PC-9 (cell line): ENCODE measurements at regions of chr14 and their contacts with region 1.

Region 1: DNA sequence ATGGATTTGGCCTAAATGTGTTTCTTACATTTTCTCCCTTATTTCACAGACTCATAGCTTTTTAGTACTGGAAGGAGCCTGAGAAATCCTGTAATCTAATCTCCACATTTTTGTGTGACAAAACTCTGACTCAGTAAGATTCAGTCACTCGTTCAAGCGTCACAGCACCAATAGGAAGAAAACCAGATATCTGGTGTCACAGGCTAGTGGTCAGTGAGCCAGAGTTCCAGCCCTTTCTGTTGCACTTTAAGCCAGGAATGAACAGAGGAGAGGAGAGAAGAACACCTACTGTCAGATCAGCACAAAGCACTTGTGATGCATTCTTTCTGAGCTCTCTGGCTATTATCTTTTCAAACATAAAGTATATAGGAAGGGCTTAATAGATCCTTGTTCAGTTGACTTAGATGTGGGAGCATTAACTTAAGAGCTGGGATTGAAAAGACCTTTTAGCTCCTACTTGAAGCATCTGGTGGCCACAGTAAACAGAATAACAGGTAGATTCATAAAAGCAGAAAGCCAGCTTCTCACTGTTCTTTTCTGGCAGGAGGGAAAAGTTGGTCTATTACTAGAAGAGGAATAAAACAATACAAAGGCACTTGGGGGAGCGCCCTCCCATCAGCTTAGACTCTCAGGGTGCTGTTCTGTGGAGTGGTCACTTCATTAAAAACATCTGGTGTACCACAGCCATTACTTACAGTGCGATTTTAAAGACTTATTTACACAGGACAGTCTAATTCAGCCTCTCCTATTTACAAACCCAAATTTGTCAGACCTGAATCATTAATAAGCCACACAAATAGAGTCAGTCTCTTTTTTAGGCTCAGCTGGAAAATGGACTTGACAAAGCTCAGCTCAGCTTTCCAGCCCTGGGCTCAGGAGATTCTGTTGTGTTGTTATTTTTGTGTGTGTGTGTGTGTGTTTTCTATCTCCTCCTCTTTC is 12.2 kb upstream of the NID2 start:
- DNase-seq: peak; percentile 59 to 82
- H3K4me3 ChIP-seq: no peak overlapping the region
- H3K27ac ChIP-seq: peak overlapping the region; percentile 87
- H3K4me1 ChIP-seq: peaks cover 60% of the 10 kb centered on the region
- H3K27me3 ChIP-seq: no peaks in the 10 kb centered on the region
- CTCF ChIP-seq: no peak

Region 2: DNA sequence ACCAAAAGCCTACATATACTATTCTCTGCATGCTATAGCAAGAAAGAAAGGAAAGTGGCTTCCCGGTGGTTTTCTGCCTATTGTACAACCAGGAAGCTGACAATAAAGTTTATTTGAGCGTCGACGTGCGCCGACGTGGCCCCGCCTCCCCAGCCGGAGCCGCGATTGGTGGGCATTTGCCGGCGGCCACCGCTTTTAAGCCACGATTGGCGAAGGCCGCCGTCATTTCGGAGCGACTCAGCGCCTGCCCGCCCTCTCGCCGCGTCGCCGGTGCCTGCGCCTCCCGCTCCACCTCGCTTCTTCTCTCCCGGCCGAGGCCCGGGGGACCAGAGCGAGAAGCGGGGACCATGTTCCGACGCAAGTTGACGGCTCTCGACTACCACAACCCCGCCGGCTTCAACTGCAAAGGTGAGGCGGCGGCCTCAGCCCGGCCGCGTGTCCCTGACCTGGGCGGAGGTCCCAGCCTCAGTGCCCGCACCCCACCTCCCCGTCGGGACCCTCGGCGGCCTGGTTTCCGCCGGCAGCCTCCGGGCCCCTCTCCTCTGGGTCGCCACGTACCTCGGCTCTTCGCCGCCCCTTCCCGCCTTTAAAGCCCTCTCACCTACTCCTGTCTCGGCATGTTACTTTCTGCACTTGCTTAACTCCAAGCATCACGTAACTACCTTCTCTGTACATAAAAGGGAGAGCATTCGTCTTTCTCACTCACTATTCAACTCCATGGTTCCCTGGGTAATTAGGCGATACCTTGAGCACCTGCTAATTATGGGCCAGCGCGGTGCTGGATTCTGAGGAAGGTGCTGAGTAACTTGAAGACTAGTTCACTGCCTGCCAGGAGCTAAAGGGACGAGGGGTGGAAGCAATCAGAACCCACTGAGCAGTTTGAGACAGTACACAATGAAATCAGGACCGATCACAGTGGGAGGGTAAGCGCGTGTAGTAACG is 91.5 kb before region 1 on chr14 and contains the start of gene RTRAF:
- CTCF ChIA-PET with region 1: no interaction called
- POLR2A ChIA-PET with region 1: interaction called, 4 read pairs
- intact Hi-C with region 1: loop called (anchors 5 kb)
- DNase-seq: peak; percentile 80 to 90
- H3K4me3 ChIP-seq: peak within 1 kb of the TSS; percentile 100
- H3K27ac ChIP-seq: peak within 1 kb of the TSS; percentile 60
- H3K4me1 ChIP-seq: peaks cover 20% of the 10 kb centered on the region
- H3K27me3 ChIP-seq: no peaks in the 10 kb centered on the region
- CTCF ChIP-seq: no peak
- total RNA-seq, gene RTRAF: 162 and 184 TPM in 2 replicates

Region 3: DNA sequence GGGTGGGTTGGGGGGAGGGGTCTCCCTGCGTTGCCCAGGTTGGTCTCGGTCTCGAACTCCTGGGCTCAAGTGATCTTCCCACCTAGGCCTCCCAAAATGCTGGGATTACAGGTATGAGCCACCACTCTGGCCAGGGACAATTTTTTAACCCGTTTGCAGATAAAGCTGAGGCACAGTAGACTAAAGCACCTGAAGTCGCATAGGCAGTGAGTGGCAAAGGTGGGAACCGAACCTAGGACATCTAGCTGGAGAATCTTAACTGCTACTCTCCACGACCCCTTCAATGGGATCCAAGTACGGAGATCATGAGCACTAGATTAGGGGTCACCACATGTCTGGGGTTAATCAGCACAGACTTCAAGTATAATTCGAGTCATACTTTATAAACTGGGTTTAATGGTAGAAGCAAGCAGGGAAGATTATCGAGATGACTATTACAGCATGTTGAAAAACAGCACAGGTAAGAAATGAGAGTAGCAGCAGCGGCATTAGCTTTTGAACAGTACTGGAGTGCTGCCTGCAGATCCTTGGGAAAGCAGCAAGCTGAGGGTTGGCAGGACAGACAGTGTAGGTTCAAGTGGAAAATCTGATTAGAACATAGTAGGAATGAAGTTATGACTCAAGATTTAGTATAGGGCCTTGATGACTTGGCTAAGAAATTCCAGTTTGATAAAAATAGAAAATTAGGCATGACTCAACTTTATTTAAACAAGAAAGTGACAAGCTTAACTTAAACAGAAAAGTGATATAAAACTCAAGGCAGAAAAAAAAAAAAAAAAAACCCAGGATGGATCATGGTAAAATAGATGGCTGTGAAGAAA is 36.1 kb before region 1 on chr14:
- CTCF ChIA-PET with region 1: interaction called, 6 read pairs
- POLR2A ChIA-PET with region 1: interaction called, 12 read pairs
- intact Hi-C with region 1: no loop called
- DNase-seq: peak; percentile 20 to 64
- H3K4me3 ChIP-seq: no peak overlapping the region
- H3K27ac ChIP-seq: peak overlapping the region; percentile 53
- H3K4me1 ChIP-seq: peaks cover 14% of the 10 kb centered on the region
- H3K27me3 ChIP-seq: no peaks in the 10 kb centered on the region
- CTCF ChIP-seq: no peak

Region 4: DNA sequence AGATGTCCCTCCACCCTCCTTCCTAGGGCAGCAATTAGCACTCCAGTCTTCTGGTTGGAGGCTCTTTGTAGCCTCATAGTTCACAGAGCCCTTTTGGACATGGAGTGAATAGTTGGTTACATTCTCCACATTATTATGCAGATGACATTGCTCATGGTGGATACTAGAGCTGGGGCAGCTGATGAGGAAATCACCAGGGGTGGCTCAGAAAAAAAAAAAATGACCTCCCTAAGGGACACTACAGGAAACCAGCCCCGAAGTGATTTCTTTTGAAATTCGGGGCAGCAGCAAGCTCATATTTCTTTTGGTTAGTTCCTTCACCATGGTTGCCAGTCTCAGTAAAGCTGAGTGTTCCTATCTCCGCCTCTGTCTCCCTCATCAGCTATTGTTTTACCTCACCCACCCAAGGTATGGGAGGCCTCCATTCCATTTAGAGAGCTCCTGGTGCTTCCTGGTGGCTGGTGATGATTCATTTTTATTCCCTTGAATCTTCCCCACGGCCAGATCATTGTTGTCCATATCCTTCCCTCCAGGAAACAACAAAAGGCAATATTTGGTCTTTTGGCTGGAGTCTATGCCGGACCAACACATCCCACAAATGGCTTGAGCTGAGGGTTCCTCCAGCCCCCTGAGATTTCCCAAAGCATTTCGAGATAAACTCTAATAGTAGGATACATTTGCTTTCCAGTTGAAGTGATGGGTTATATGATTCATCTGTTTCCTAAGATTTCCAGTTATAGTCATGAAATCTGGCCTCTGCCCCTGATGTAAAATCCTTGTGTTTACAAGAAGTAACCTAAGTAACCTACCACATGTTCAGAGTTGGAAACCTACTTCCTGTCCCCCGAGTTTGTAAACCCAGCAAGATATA is 43.9 kb after region 1 on chr14:
- CTCF ChIA-PET with region 1: interaction called, 8 read pairs
- POLR2A ChIA-PET with region 1: interaction called, 12 read pairs
- intact Hi-C with region 1: loop called (anchors 1 kb)
- DNase-seq: peak; percentile 63 to 72
- H3K4me3 ChIP-seq: peak overlapping the region; percentile 9; the same call in 1 of the 2 replicates
- H3K27ac ChIP-seq: peak overlapping the region; percentile 67
- H3K4me1 ChIP-seq: peaks cover 21% of the 10 kb centered on the region
- H3K27me3 ChIP-seq: no peaks in the 10 kb centered on the region
- CTCF ChIP-seq: no peak